ENCODE measurements at regions of chr6 and their contacts with region 1.

Region 1: DNA sequence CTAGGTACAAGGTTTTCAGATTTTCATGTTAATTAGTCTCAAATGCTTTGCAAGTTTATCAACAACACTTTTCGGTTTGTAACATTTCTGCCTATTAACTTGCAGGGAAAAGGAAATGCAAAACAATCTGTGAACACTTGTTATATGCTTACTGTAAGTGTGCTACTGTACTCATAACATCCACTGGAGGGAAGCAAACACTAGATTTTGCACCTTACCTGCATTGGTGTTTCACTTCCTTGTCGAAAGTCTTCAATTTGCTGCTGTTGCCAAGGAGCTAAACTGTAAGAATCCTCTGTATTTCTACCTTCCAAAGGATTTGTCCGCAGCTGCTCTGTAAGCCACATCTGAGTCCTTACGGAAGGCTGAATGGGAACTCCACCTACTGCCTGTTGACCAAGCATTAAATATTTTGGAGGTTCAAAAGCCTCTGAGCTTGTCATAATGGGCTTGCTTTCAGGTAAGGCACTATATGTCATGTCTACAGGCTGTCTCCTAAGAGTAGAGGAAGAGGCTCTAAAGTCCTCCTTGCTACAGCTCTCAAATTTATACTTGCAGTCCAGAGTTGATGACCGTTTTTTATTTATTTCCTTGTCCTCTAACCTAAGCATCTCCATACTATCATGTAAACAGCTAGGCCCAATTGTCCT is 17.3 kb downstream of the PLN start:
- DNase-seq: peak; percentile 81
- ATAC-seq: peak; percentile 94
- H3K4me3 ChIP-seq: no peak overlapping the region
- H3K4me3 Mint-ChIP-seq: no peak overlapping the region
- H3K27ac ChIP-seq: peak overlapping the region in 1 of 2 donors; percentile 49
- H3K27ac Mint-ChIP-seq: peak overlapping the region; percentile 5
- H3K4me1 ChIP-seq: peaks cover 6% of the 10 kb centered on the region in 2 donors
- H3K4me1 Mint-ChIP-seq: peaks cover 9% of the 10 kb centered on the region
- H3K27me3 ChIP-seq: no peaks in the 10 kb centered on the region
- H3K27me3 Mint-ChIP-seq: no peaks in the 10 kb centered on the region
- CTCF ChIP-seq: peak; percentile 85

Region 2: DNA sequence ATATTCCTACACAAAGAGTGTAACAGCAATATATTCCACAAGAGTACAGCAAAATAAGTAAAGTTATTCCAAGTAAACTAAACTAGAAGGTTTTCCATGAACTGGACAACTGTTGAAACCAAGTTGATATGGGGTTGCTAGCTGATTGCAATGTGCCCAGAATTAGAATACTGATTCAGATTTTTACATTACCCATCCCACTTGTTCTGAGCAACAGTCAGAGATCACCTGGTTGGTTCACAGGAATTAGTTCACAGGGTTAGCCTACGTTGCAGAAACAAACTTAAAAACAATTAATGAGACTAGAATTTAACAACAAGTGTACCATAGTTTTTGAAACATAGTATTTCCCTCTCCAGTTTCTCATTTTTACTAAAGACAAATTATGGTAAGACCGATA is 36.9 kb after region 1 on chr6:
- CTCF ChIA-PET with region 1: interaction called, 11 read pairs
- POLR2A ChIA-PET with region 1: no interaction called
- intact Hi-C with region 1: no loop called
- DNase-seq: no peak
- ATAC-seq: no peak
- H3K4me3 ChIP-seq: no peak overlapping the region
- H3K4me3 Mint-ChIP-seq: no peak overlapping the region
- H3K27ac ChIP-seq: no peak overlapping the region
- H3K27ac Mint-ChIP-seq: no peak overlapping the region
- H3K4me1 ChIP-seq: no peaks in the 10 kb centered on the region
- H3K4me1 Mint-ChIP-seq: peaks cover 10% of the 10 kb centered on the region
- H3K27me3 ChIP-seq: no peaks in the 10 kb centered on the region
- H3K27me3 Mint-ChIP-seq: no peaks in the 10 kb centered on the region
- CTCF ChIP-seq: no peak

Region 3: DNA sequence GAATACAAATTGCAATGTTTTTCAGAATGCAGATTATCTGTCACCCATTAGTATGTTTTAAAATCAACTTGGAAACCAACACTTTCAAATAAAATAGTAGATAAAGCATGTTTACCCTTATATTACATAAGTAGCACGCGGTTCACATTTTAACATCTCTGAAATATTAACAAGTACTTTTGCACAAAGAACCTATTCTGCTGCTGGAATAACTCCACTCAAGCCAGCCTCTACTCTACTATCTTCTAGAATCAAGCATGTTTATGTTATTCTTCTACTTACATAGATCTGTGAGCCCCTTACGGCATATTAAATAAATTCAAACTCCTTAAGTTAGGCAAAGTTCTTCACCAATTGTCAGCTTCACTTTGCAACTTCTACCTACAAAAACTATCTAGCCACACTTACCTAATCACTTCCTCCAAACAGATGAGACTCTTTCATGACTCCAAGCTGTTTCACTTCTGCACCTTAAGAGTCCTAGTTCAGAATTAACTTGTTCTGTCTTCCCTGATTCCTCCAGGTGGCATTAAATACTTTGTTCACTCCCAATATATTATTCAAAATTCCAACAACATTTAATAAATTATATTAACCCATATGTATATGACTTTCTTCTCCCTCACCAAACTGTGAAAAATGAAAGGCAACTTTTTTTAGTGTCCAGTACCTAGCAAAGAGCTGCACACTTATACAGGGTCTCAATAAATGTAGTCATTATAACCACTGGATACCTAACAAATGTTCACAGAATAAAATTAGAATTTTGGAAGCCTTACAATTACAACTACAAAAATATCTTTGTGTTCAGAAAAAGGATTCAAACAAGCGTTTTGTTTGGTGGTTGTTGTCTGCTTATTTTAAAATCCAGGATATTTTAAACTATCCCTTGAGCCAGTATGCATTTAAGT is 73.9 kb after region 1 on chr6:
- CTCF ChIA-PET with region 1: interaction called, 10 read pairs
- POLR2A ChIA-PET with region 1: no interaction called
- intact Hi-C with region 1: no loop called
- DNase-seq: peak; percentile 26
- ATAC-seq: no peak
- H3K4me3 ChIP-seq: no peak overlapping the region
- H3K4me3 Mint-ChIP-seq: no peak overlapping the region
- H3K27ac ChIP-seq: no peak overlapping the region
- H3K27ac Mint-ChIP-seq: no peak overlapping the region
- H3K4me1 ChIP-seq: peaks cover 2 to 11% of the 10 kb centered on the region in 2 donors
- H3K4me1 Mint-ChIP-seq: peaks cover 29% of the 10 kb centered on the region
- H3K27me3 ChIP-seq: no peaks in the 10 kb centered on the region
- H3K27me3 Mint-ChIP-seq: no peaks in the 10 kb centered on the region
- CTCF ChIP-seq: no peak

Region 4: DNA sequence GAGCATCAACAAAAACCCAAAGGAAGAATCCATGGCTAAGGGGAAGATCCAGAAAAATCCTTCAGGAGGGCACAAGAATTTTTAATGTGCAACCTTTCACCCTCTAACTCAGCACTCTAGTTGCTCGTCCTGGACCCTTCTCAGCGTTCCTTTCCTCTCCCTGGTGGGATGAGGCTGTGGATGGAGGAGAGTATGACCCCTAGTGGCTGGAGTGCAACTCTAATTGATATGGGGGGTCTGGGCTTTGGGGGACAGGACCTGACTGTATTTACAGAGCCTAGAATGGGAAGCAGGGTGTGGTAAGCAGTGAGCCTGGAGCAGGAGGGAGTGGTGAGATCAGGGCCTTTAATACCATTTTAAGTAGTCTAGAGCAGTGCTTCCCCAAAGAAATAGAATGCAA is 169.9 kb after region 1 on chr6:
- CTCF ChIA-PET with region 1: interaction called, 36 read pairs
- POLR2A ChIA-PET with region 1: no interaction called
- intact Hi-C with region 1: loop called (anchors 1 kb)
- DNase-seq: peak; percentile 52
- ATAC-seq: peak; percentile 45
- H3K4me3 ChIP-seq: no peak overlapping the region
- H3K4me3 Mint-ChIP-seq: no peak overlapping the region
- H3K27ac ChIP-seq: no peak overlapping the region
- H3K27ac Mint-ChIP-seq: no peak overlapping the region
- H3K4me1 ChIP-seq: peaks cover 0 to 5% of the 10 kb centered on the region in 2 donors
- H3K4me1 Mint-ChIP-seq: peaks cover 5% of the 10 kb centered on the region
- H3K27me3 ChIP-seq: peaks cover 0 to 3% (median 2%) of the 10 kb centered on the region in 4 experiments
- H3K27me3 Mint-ChIP-seq: peaks cover 3% of the 10 kb centered on the region
- CTCF ChIP-seq: peak; percentile 38

Region 5: DNA sequence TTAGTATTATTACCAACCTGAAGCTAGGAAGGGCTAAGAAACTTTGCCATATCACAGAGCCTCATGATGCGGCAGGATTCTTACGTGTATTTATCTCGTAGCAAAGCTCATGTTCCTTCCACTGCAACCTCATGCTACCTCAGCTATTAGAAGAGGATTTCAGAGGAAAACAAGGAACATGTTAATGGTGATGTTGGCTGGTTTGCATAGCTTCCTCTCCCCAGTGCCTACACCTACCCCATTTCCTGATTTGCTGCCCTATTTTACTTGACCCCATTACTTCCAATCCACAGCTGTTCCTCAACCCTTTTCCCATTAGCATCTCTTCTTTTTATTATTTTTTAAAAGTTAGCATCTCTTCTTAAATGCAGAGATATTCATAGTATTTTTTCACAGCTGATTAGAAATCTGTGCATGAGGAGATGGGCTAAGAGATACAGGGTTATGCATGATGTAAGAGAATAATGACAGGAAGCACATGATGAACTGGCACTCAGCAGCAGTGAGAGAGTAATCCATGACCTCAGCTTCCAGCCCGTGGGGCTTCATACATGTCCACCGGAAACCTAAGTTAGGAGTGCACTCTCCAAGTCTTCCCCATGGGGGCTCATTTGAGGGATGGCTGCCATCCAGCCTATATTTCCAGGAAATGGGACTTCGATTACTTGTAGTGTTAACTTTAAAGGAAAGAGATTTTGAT is 222.4 kb after region 1 on chr6:
- CTCF ChIA-PET with region 1: interaction called, 17 read pairs
- POLR2A ChIA-PET with region 1: no interaction called
- intact Hi-C with region 1: no loop called
- DNase-seq: no peak
- ATAC-seq: no peak
- H3K4me3 ChIP-seq: no peak overlapping the region
- H3K4me3 Mint-ChIP-seq: peak overlapping the region; percentile 1
- H3K27ac ChIP-seq: no peak overlapping the region
- H3K27ac Mint-ChIP-seq: no peak overlapping the region
- H3K4me1 ChIP-seq: peaks cover 7 to 12% of the 10 kb centered on the region in 2 donors
- H3K4me1 Mint-ChIP-seq: peaks cover 15% of the 10 kb centered on the region
- H3K27me3 ChIP-seq: no peaks in the 10 kb centered on the region
- H3K27me3 Mint-ChIP-seq: no peaks in the 10 kb centered on the region
- CTCF ChIP-seq: no peak

Region 6: DNA sequence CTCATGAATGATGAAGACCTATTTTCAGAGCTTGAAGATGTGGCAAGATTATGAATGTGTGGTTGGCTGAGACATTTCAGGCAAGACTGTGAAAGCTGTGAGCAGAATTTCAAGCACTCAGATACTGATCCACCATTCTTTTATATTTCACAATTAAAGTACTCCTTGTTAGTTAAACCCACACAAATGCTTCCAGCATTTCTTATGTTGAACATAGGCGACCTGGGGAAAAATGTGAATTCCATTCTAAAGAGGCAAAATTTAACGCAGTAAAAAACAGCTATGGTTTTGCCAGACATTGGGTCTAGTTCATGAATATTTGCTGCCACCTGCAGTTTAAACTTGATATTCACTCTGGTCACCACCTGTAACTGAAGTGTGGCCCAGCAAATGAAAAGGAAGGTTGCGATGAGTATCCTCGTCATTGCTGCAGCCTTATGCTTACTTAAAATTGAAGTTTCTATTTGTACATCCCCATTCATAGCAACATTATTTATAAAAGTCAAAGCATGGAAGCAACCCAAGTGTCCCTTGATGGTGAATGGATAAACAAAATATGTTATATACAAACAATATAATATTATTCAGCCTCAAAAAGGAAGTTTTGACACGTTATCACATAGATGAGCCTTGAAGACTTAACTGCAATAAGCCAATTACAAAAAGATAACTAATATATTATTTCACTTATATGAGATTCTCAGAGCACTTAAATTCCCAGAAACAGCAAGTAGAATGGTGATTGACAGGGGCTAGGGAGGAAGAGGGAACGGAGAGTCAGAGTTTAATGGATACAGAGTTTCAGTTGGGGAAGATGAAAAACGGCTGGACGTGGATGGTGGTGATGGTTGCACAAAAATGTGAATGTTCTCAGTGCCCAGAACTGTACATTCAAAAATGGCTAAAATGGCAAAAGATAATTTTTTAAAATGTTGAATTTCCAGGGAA is 545.4 kb after region 1 on chr6:
- CTCF ChIA-PET with region 1: interaction called, 45 read pairs
- POLR2A ChIA-PET with region 1: no interaction called
- intact Hi-C with region 1: no loop called
- DNase-seq: peak; percentile 65
- ATAC-seq: peak; percentile 45
- H3K4me3 ChIP-seq: no peak overlapping the region
- H3K4me3 Mint-ChIP-seq: no peak overlapping the region
- H3K27ac ChIP-seq: no peak overlapping the region
- H3K27ac Mint-ChIP-seq: no peak overlapping the region
- H3K4me1 ChIP-seq: no peaks in the 10 kb centered on the region
- H3K4me1 Mint-ChIP-seq: peaks cover 8% of the 10 kb centered on the region
- H3K27me3 ChIP-seq: no peaks in the 10 kb centered on the region
- H3K27me3 Mint-ChIP-seq: peaks cover 10% of the 10 kb centered on the region
- CTCF ChIP-seq: peak; percentile 74

Measured in B cell (primary cell).